PC-3 (cell line): ENCODE measurements at regions of chr4 and their contacts with region 1.

Region 1: DNA sequence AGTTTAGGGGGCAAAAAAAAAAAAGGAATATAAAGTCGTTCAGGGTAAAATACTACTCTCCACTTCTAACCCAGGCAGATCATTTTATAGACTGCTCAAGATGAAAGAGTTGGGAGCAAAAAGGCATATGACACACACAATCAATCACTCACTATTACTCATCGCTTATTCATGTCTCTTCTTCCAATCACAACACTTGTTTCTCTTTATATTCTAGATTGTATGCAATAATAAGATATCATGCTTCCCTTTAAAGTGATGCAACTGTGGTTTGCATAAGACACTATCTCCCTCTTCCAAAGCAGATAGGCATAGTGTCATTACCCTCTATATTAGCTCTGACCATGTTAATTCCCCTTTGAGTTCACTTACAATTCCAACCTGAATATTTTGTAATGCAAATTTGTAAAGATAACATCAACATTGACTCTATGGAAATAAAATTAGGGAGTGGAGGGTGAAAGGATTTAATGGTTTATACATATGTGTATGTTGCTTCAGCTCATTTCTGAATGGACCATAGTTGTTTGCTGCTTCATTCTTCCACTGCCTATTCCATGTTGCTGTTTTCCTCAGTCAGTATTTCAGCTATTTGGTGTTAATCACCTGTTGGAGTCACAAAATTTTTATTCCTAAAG is 154.9 kb upstream of the EPHA5 start:
- DNase-seq: peak; percentile 91
- ATAC-seq: peak; percentile 86
- H3K4me3 ChIP-seq: no peak overlapping the region
- H3K27ac ChIP-seq: peak overlapping the region; percentile 41
- H3K4me1 ChIP-seq: peaks cover 26% of the 10 kb centered on the region
- H3K27me3 ChIP-seq: no peaks in the 10 kb centered on the region
- CTCF ChIP-seq: no peak

Region 2: GRCh38 chr4:65508169-65508568 is 317.1 kb before region 1 on chr4:
- CTCF ChIA-PET with region 1: no interaction called
- POLR2A ChIA-PET with region 1: no interaction called
- intact Hi-C with region 1: loop called (anchors 10 kb)
- DNase-seq: peak; percentile 98
- ATAC-seq: peak; percentile 72
- H3K4me3 ChIP-seq: 0 out of 2 replicates have a peak overlapping the region, but pooled peaks have one; percentile 12
- H3K27ac ChIP-seq: peak overlapping the region; percentile 79
- H3K4me1 ChIP-seq: peaks cover 46% of the 10 kb centered on the region
- H3K27me3 ChIP-seq: no peaks in the 10 kb centered on the region
- CTCF ChIP-seq: no peak

Region 3: GRCh38 chr4:65617416-65617815 is 207.8 kb before region 1 on chr4:
- CTCF ChIA-PET with region 1: no interaction called
- POLR2A ChIA-PET with region 1: no interaction called
- intact Hi-C with region 1: no loop called
- DNase-seq: no peak
- ATAC-seq: no peak
- H3K4me3 ChIP-seq: no peak overlapping the region
- H3K27ac ChIP-seq: no peak overlapping the region
- H3K4me1 ChIP-seq: no peaks in the 10 kb centered on the region
- H3K27me3 ChIP-seq: no peaks in the 10 kb centered on the region
- CTCF ChIP-seq: no peak

Region 4: GRCh38 chr4:65880594-65880993 is 55.4 kb after region 1 on chr4:
- CTCF ChIA-PET with region 1: no interaction called
- POLR2A ChIA-PET with region 1: no interaction called
- intact Hi-C with region 1: no loop called
- DNase-seq: peak; percentile 48
- ATAC-seq: peak; percentile 64
- H3K4me3 ChIP-seq: no peak overlapping the region
- H3K27ac ChIP-seq: no peak overlapping the region
- H3K4me1 ChIP-seq: no peaks in the 10 kb centered on the region
- H3K27me3 ChIP-seq: no peaks in the 10 kb centered on the region
- CTCF ChIP-seq: peak; percentile 50

Region 5: GRCh38 chr4:66000510-66001117 is 175.4 kb after region 1 on chr4:
- CTCF ChIA-PET with region 1: no interaction called
- POLR2A ChIA-PET with region 1: no interaction called
- intact Hi-C with region 1: no loop called
- DNase-seq: peak; percentile 35
- ATAC-seq: peak; percentile 61
- H3K4me3 ChIP-seq: peak overlapping the region; percentile 69
- H3K27ac ChIP-seq: peak overlapping the region; percentile 11; the same call in 1 of the 2 replicates
- H3K4me1 ChIP-seq: peaks cover 4% of the 10 kb centered on the region; the same call in 1 of the 2 replicates
- H3K27me3 ChIP-seq: no peaks in the 10 kb centered on the region
- CTCF ChIP-seq: no peak